BJ (cell line): ENCODE measurements at regions of chr6 and their contacts with region 1.

Region 1: DNA sequence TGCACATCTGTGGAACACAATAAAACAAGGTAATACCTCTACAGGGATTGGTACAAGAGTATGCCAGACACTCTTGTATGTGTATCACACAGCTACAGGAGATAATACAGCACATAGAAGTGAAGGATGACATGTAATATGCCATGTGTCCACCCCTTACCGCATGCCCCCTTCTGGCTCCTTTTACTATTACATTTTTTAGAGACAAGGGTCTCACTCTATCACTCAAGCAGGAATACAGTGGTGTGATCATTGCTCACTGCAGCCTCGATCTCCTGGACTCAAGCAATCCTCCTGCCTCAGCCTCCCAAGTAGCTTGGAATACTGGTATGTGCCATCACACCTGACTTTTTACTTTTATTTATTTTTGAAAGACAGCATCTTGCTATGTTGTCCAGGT is 4.2 kb upstream of the NCR3 start:
- DNase-seq: no peak
- H3K4me3 ChIP-seq: no peak overlapping the region
- H3K27me3 ChIP-seq: no peaks in the 10 kb centered on the region
- CTCF ChIP-seq: peak; percentile 37

Region 2: DNA sequence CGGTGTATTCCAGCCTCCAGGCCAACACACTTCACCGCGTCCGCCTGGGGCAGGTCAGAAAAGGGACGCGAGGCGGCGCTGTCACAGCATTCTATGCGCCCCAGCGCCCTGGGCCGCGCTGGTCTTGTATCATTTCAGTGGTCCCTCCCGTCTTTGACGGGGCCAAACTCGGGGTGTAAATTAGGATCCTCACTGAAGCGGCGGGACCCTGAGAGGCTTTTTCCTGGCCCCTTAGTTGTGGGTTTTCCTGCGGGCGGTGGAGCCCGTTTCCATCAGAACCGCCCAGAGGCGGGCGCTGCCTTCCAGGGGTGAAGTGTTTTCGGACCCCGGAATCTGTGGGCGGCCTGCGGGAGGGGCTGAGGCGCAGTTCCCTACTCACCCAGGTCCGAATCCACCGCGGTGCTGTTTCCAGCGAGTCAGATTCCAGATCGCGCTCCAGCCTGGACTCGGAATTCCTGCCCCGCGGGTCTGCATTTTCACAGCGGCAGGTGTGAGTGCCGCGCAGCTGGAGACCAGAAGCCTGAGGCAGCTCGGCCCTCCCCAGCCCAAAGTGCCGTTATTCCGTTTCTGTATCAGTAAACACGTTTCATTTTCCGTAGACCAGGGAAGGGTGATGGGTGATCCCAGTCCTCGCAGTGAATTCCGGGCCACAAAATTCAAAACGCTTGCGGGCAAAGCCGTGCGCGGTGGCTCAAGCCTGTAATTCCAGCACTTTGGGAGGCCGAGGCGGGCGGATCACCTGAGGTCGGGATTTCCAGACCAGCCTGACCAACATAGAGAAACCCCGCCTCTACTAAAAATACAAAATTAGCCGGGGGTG is 102.9 kb before region 1 on chr6:
- CTCF ChIA-PET with region 1: interaction called, 44 read pairs
- POLR2A ChIA-PET with region 1: no interaction called
- DNase-seq: no peak
- H3K4me3 ChIP-seq: peak overlapping the region; percentile 71
- H3K27me3 ChIP-seq: no peaks in the 10 kb centered on the region
- CTCF ChIP-seq: peak; percentile 95

Region 3: DNA sequence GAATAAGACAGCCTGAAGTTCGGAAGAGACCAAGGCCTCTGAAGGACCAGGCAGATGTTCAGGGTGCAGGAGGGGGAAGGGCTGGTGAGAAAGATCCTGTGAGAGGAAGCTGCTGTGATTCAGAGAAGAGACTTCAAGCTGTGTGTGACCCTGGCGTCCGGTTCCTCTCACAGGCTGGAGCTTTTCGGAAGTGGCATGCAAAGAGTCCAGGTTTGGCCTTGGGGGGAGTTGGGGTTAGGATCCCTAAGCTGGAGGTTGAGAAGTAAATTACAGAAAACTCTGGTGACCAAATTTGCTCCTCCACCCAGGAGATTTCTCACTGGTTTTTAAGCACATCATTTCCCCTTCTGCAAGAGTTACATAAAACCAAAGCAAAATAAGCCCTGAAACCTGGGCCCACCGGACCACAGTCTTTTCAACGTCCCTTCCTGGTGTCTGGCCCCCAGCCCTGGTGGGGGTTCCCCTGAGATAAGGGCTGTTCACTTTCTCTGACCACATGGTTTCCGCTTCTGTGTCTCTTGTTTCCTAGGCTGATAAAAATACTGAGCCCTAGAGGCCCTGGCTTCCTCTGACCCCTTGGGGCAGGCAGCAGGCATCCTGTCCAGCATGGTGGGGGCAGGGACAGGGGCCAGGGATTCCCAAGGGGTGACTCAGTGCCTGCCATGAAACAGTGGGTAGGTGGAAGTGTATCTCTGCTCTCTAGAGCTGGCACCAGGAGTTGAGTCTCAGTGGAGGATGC is 36.9 kb before region 1 on chr6:
- CTCF ChIA-PET with region 1: interaction called, 29 read pairs
- POLR2A ChIA-PET with region 1: no interaction called
- DNase-seq: no peak
- H3K4me3 ChIP-seq: no peak overlapping the region
- H3K27me3 ChIP-seq: no peaks in the 10 kb centered on the region
- CTCF ChIP-seq: no peak

Region 4: DNA sequence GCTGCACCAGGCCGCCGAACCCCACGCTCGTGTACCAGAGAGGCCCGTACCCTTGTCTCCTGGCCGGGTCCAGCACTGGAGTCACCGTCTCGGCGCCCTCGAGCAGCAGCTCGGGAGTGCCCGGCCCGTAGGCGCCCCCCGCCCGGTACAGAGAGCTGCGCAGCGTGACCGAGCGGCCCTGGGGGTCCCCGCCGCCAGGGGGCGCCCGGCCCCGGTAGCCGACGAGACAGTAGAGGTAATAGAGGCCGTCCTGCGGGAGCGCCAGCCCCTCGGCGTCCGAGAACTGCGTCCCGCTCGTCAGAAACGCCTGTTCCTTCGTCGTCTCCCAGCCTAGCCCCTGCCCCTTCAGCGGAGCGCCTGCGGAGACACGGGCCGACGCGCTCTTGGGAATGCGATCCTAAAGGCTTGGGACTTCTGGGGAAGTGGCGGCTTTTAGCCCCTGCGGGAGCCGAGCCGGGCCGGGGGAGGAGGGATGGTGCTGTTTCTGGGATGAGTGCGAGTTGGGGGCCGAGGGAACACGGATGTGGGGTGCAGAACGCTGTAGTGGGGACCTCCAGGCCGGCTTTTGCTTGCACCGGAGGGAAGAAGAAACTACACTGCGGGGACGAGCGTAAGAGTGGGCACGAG is 16.1 kb before region 1 on chr6:
- CTCF ChIA-PET with region 1: interaction called, 182 read pairs
- POLR2A ChIA-PET with region 1: no interaction called
- DNase-seq: no peak
- H3K4me3 ChIP-seq: peak overlapping the region; percentile 75
- H3K27me3 ChIP-seq: no peaks in the 10 kb centered on the region
- CTCF ChIP-seq: peak; percentile 88

Region 5: DNA sequence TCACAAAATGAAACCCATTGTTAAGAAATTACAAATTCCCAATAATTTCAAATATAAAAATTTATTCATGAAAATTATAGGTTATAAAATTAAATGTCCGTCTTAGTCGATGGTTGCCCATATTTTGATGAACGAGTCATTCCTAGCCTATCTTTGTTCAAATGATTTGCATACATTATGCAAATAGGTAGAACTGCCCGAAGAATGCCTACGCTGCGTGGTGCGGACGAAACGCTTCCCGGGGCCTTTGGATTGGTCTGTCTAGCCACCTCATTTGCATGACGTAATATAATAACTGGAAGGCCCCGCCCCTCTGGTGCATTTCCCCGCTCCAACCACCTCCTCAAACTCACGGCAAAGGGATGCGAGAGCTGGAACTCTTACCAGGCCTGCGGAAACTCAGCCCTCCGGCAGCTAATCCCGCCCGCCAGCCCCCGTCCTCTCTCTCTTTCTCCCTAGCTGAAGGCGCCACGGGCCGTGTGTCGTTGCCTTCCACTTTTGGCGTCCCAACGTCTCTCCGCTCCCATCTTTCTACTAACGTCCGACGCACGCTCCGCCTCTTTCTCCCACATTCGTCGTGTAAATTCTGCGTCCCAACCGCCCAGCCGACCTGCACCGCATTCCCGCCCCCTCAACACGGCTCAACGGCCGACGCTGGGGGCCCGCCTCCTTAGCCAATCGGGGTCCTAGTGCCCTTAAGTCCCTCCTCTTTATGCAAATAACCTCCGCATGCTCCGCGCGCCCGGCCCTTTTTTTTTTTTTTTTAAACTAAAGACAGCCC is 23.0 kb after region 1 on chr6:
- CTCF ChIA-PET with region 1: interaction called, 18 read pairs
- POLR2A ChIA-PET with region 1: interaction called, 4 read pairs
- DNase-seq: peak; percentile 97
- H3K4me3 ChIP-seq: peak overlapping the region; percentile 64
- H3K27me3 ChIP-seq: no peaks in the 10 kb centered on the region
- CTCF ChIP-seq: no peak